Gastrocnemius medialis (tissue), 4 donors: ENCODE measurements at regions of chr6 and their contacts with region 1.

Region 1: DNA sequence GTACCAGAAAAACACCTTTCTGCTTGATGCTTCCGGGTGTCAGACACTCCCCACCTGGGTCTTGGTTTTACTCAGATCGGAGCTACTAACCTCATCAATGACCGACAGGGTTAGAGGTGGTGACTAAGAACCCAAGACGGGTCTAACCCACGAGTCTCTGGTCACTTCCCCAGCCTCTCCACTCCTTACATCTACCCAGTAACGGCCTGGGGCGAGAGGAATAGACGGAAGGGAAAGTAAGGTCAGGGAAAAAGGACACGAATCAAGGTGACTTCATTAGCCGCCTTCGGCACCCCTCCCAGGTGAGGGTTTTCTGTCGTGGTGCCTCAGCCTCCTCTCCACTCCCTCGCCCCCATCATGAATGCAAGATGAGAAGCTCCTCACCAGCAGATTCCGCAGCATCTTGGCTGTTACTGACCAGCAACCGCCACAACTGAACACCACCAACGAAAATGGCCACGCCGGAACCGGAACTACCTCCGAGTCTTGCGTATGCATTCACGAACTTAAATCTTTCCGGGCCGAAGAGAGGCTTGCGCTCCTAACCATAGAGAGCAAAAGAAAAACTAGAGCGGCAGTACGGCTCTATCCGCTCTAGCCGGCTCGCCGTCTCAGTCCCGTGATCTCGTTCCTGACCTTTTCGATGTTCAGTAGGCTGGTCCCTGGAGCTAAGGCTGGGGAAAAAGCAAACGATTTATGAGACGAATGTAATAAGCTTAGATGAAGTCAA is at the start of gene COX7A2:
- DNase-seq: peak; percentile 85 to 93
- ATAC-seq: peak; percentile 99 to 100
- H3K4me3 ChIP-seq: peak within 1 kb of the TSS; percentile 64 to 87 (median 76)
- H3K27ac ChIP-seq: peak within 1 kb of the TSS; percentile 88 to 91 (median 90)
- H3K4me1 ChIP-seq: peaks cover 17 to 32% of the 10 kb centered on the region in 2 donors
- H3K27me3 ChIP-seq: no peaks in the 10 kb centered on the region
- CTCF ChIP-seq: no peak
- POLR2A ChIP-seq: peak; percentile 68 to 79
- total RNA-seq, gene COX7A2: 166 to 413 (median 222) TPM

Region 2: DNA sequence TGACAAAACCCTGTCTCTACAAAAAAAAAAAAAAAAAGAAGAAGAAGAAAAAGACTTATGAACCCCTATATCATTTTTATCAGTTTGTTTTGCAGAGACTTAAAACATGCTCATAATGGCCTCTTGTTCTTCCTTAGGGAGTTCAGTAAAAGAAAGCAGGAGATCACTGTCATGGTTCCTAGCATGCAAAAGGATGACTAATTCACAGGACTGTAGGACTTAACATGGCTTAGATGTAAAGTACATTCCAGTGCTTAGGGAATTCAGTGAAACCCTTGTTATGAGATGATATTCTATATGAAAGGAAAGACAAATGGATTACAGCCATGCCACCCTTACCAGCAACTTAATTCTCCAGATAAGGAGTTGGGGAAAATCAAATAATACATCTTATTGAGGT is 1752.1 kb before region 1 on chr6:
- in situ Hi-C with region 1: loop called in 2 of 4 experiments (anchors 25 kb)
- intact Hi-C with region 1: no loop called
- DNase-seq: no peak
- ATAC-seq: no peak
- H3K4me3 ChIP-seq: no peak overlapping the region
- H3K27ac ChIP-seq: no peak overlapping the region
- H3K4me1 ChIP-seq: no peaks in the 10 kb centered on the region
- H3K27me3 ChIP-seq: no peaks in the 10 kb centered on the region
- CTCF ChIP-seq: no peak
- POLR2A ChIP-seq: no peak

Region 3: DNA sequence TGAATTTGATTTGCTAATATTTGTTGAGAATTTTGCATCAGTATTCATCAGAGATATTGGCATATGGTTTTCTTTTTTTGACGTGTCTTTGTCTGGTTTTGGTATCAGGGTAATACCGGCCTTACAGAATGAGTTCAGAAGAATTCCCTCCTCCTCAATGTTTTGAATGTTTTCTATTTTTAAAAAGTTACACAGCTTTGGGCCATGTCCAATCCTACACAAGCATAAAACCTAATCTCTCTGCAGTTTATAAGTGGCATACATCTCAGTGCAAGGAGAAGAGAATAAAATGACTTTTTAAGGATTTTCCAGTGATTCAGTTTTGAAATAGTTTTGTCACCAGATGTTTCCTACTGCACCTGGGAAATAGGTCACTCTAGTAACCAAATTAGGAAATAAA is 223.1 kb before region 1 on chr6:
- in situ Hi-C with region 1: no loop called
- intact Hi-C with region 1: no loop called
- DNase-seq: no peak
- ATAC-seq: no peak
- H3K4me3 ChIP-seq: no peak overlapping the region
- H3K27ac ChIP-seq: no peak overlapping the region
- H3K4me1 ChIP-seq: no peaks in the 10 kb centered on the region
- H3K27me3 ChIP-seq: no peaks in the 10 kb centered on the region
- CTCF ChIP-seq: no peak
- POLR2A ChIP-seq: no peak

Region 4: GRCh38 chr6:75117701-75118100 is 125.8 kb before region 1 on chr6:
- in situ Hi-C with region 1: no loop called
- intact Hi-C with region 1: no loop called
- DNase-seq: no peak
- ATAC-seq: no peak
- H3K4me3 ChIP-seq: no peak overlapping the region
- H3K27ac ChIP-seq: no peak overlapping the region
- H3K4me1 ChIP-seq: no peaks in the 10 kb centered on the region
- H3K27me3 ChIP-seq: no peaks in the 10 kb centered on the region
- CTCF ChIP-seq: no peak
- POLR2A ChIP-seq: no peak

Region 5: DNA sequence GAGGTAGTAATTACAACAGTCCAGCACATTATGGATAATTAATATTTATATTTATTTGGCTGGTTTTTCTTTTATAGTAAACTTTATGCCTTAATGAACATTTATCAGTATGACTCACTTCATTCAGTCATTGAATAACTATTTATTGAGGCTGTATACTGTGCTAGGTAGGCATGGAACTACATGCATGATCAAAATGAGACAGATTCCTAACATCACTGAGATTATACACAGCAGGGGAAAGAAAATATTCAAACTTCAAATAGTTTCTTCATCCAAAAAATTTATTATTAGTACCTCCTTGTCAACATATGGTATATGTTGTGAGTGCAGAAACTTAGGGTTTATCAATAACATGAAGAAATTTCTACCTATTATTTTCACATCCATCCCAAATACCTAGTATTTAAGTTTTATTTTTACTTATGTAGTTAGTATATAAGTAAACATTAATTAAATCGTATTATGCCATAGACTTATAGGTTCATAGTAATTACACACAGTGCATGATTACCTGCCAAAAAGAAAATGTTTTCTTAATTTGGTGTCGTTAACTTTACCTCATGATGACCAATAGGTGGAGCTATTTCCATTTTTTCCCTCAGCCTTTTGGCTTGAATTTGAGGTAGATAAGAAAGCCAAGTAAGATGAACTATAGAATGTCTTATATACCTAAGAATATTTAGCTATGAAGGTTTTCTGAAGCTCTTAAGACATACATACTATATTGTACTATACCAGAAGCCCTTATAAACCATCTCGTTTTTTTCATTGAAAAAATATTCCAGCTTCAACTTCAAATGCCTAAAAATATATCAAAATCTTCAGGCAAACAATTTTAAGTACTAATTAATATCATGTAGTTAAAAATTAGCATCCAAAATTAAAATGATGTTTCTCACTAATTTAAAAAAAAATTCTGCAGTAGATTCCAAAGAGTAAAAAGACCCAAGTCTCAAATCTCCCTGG is 53.6 kb after region 1 on chr6:
- in situ Hi-C with region 1: no loop called
- intact Hi-C with region 1: no loop called
- DNase-seq: no peak
- ATAC-seq: peak; percentile 43 to 47
- H3K4me3 ChIP-seq: no peak overlapping the region
- H3K27ac ChIP-seq: no peak overlapping the region
- H3K4me1 ChIP-seq: peaks cover 23 to 27% of the 10 kb centered on the region in 2 donors
- H3K27me3 ChIP-seq: no peaks in the 10 kb centered on the region
- CTCF ChIP-seq: peak; percentile 58 to 79 (median 67)
- POLR2A ChIP-seq: no peak